Vagina (tissue), 2 donors: ENCODE measurements at regions of chr10 and their contacts with region 1.

Region 1: GRCh38 chr10:72204296-72204695 is 11.5 kb upstream of the ANAPC16 start:
- DNase-seq: no peak
- H3K4me3 ChIP-seq: no peak overlapping the region
- H3K27ac ChIP-seq: no peak overlapping the region
- H3K4me1 ChIP-seq: no peaks in the 10 kb centered on the region
- H3K27me3 ChIP-seq: no peaks in the 10 kb centered on the region
- CTCF ChIP-seq: no peak
- POLR2A ChIP-seq: no peak

Region 2: DNA sequence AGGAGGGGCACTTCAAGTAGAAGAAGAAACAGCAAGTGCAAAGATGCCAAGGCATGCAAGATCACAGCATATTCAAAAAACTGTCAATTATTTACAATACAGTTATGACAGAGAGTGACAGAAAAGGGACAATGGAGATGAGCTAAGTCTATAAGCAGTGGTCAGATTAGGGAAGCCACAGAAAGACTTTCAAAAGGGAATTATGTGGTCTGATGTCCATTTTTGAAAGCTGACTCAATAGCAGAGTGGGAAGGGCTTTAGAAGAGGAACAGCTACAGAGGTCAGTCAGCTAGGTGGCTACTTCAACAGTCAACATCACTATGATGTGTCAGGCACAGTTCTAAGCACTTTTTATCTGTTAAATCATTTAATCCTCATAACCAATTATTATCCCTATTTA is 70.8 kb before region 1 on chr10:
- intact Hi-C with region 1: loop called (anchors 10 kb)
- DNase-seq: no peak
- H3K4me3 ChIP-seq: no peak overlapping the region
- H3K27ac ChIP-seq: no peak overlapping the region
- H3K4me1 ChIP-seq: no peaks in the 10 kb centered on the region
- H3K27me3 ChIP-seq: no peaks in the 10 kb centered on the region
- CTCF ChIP-seq: no peak
- POLR2A ChIP-seq: no peak

Region 3: GRCh38 chr10:72162978-72163377 is 41.3 kb before region 1 on chr10:
- intact Hi-C with region 1: no loop called
- DNase-seq: no peak
- H3K4me3 ChIP-seq: no peak overlapping the region
- H3K27ac ChIP-seq: no peak overlapping the region
- H3K4me1 ChIP-seq: no peaks in the 10 kb centered on the region
- H3K27me3 ChIP-seq: no peaks in the 10 kb centered on the region
- CTCF ChIP-seq: no peak
- POLR2A ChIP-seq: no peak

Region 4: DNA sequence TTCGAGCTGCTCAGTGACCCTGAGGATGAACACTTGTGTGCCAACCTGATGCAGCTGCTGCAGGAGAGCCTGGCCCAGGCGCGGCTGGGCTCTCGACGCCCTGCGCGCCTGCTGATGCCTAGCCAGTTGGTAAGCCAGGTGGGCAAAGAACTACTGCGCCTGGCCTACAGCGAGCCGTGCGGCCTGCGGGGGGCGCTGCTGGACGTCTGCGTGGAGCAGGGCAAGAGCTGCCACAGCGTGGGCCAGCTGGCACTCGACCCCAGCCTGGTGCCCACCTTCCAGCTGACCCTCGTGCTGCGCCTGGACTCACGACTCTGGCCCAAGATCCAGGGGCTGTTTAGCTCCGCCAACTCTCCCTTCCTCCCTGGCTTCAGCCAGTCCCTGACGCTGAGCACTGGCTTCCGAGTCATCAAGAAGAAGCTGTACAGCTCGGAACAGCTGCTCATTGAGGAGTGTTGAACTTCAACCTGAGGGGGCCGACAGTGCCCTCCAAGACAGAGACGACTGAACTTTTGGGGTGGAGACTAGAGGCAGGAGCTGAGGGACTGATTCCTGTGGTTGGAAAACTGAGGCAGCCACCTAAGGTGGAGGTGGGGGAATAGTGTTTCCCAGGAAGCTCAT is 70.5 kb after region 1 on chr10:
- intact Hi-C with region 1: no loop called
- DNase-seq: no peak
- H3K4me3 ChIP-seq: peak overlapping the region; percentile 90 to 99
- H3K27ac ChIP-seq: peak overlapping the region; percentile 99
- H3K4me1 ChIP-seq: peaks cover 34% of the 10 kb centered on the region
- H3K27me3 ChIP-seq: no peaks in the 10 kb centered on the region
- CTCF ChIP-seq: peak; percentile 21 to 61 (median 58)
- POLR2A ChIP-seq: no peak